HCT116 (cell line): ENCODE measurements at regions of chr4 and their contacts with region 1.

Region 1: GRCh38 chr4:20474119-20474518 is 222.4 kb downstream of the SLIT2 start:
- DNase-seq: no peak
- ATAC-seq: no peak
- H3K4me3 ChIP-seq: no peak overlapping the region
- H3K27ac ChIP-seq: no peak overlapping the region
- H3K4me1 ChIP-seq: no peaks in the 10 kb centered on the region
- H3K27me3 ChIP-seq: 0 out of 2 replicates have a peak, but pooled peaks cover 3% of the 10 kb centered on the region
- CTCF ChIP-seq: no peak
- POLR2A ChIP-seq: no peak
- RAD21 ChIP-seq: no peak

Region 2: DNA sequence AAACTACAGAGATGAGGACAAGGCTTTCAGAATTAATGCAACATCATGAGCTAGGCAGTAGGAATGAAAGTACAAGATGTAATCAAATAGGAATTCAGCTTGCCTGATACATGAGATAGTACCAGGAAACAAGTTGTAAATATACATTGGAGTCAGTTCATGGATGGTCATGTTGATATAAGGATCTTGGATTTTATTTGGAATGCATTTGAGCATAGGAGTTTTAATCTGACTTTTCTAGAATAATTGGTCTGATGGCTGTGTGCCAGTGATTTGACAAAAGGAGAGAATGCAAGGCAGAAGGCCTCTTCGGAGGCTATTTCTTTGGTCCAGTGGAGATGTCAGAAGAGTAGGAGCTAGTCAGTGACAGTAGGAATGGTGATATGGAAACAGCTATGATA is 19.7 kb after region 1 on chr4:
- CTCF ChIA-PET with region 1: no interaction called
- POLR2A ChIA-PET with region 1: no interaction called
- RAD21 ChIA-PET with region 1: no interaction called
- intact Hi-C with region 1: loop called (anchors 2 kb)
- DNase-seq: no peak
- ATAC-seq: no peak
- H3K4me3 ChIP-seq: no peak overlapping the region
- H3K27ac ChIP-seq: no peak overlapping the region
- H3K4me1 ChIP-seq: no peaks in the 10 kb centered on the region
- H3K27me3 ChIP-seq: no peaks in the 10 kb centered on the region
- CTCF ChIP-seq: no peak
- POLR2A ChIP-seq: no peak
- RAD21 ChIP-seq: no peak